A673 (cell line): ENCODE measurements at regions of chr12 and their contacts with region 1.

Region 1: DNA sequence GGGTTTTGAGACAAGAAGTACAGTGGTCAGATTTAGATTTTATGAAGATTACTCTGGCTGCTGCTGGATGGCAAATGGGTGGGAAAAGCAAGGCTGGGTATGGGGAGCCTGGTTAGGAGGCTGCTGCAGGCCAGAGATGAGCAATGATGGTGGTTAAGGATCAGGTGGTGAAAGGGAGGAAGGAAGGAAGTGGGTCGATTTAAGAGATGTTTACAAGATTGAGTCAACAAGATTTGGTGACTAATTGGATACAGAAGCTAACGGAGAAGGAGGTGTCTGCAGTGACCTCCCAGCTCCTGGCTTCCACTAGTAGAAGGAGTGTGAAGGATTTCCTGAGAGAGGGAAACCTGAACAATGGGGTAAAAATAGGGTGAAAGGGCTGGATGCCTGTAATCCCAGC is 18.7 kb downstream of the NOS1 start:
- DNase-seq: peak; percentile 89
- H3K4me3 ChIP-seq: no peak overlapping the region
- H3K27ac ChIP-seq: peak overlapping the region; percentile 74
- H3K4me1 ChIP-seq: peaks cover 55% of the 10 kb centered on the region
- H3K27me3 ChIP-seq: no peaks in the 10 kb centered on the region
- CTCF ChIP-seq: no peak

Region 2: GRCh38 chr12:117273091-117273490 is 69.6 kb before region 1 on chr12:
- CTCF ChIA-PET with region 1: no interaction called
- POLR2A ChIA-PET with region 1: no interaction called
- intact Hi-C with region 1: loop called (anchors 5 kb)
- DNase-seq: peak; percentile 48
- H3K4me3 ChIP-seq: no peak overlapping the region
- H3K27ac ChIP-seq: no peak overlapping the region
- H3K4me1 ChIP-seq: no peaks in the 10 kb centered on the region
- H3K27me3 ChIP-seq: no peaks in the 10 kb centered on the region
- CTCF ChIP-seq: no peak